ENCODE measurements at regions of chr21 and their contacts with region 1.

Region 1: GRCh38 chr21:37267269-37268184 is at the start of gene VPS26C:
- DNase-seq: peak; percentile 97 to 99
- ATAC-seq: peak; percentile 88 to 94
- H3K4me3 ChIP-seq: peak within 1 kb of the TSS; percentile 72 to 90 (median 84)
- H3K27ac ChIP-seq: peak within 1 kb of the TSS; percentile 89 to 97 (median 96)
- H3K4me1 ChIP-seq: peaks cover 37 to 41% of the 10 kb centered on the region in 2 donors
- H3K27me3 ChIP-seq: no peaks in the 10 kb centered on the region
- CTCF ChIP-seq: peak in 1 of 5 experiments; percentile 32
- POLR2A ChIP-seq: peak; percentile 88 to 92
- total RNA-seq, gene VPS26C: 57.6 to 82.7 (median 75.4) TPM

Region 2: DNA sequence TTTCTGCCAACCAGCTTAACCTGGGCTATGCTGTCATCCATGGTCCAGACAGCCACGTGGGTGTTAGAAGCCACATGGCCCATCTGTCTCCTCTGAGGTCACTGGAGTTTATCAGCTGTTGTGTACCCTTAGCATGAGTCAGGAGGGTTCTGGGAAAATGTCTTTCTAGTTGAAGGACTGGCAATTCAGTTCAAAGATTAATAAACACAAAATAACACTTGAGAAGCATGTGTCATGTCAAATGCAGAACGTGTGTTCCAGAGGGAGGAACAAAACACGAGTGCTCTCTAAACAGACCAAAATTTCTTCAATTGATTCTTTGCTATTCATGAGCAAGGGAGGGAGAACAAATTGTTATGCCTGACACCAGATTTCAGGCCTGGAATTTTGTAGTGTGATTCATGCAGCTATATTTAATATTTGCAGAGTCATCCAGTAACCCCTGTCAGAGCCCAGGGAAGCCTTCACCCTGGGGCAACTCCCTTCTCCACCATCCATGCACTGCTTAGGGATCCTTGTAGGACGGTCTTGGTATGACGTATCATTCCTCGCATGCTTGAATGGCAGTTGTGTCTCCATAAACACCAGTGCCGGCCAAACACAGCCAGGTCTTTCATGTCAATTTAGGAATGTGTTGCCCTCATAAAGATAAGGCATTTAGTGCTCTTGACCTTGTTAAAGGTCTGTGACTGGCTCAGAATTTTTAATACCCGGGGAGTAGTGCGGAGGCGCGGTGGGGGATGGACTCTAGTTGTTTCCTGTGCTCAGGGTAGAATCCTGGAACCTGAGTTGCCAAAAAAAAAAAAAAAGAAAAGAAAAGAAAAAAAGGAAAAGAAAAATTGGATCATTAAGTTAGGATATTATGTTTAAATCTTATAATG is 71.4 kb after region 1 on chr21:
- in situ Hi-C with region 1: no loop called
- intact Hi-C with region 1: loop called (anchors 1 kb)
- DNase-seq: peak; percentile 70 to 92
- ATAC-seq: peak; percentile 96 to 97
- H3K4me3 ChIP-seq: peak overlapping the region; percentile 17 to 40 (median 28)
- H3K27ac ChIP-seq: peak overlapping the region; percentile 85 to 92 (median 86)
- H3K4me1 ChIP-seq: peaks cover 10 to 21% of the 10 kb centered on the region in 2 donors
- H3K27me3 ChIP-seq: no peaks in the 10 kb centered on the region
- CTCF ChIP-seq: no peak
- POLR2A ChIP-seq: peak in 1 of 2 donors; percentile 12